ENCODE measurements at regions of chr1 and their contacts with region 1.

Region 1: GRCh38 chr1:86114236-86114635 is 42.3 kb downstream of the COL24A1 start:
- H3K4me3 ChIP-seq: no peak overlapping the region
- H3K27ac ChIP-seq: no peak overlapping the region
- H3K4me1 ChIP-seq: no peaks in the 10 kb centered on the region
- CTCF ChIP-seq: no peak

Region 2: GRCh38 chr1:86052948-86053698 is 61.1 kb before region 1 on chr1:
- CTCF ChIA-PET with region 1: no interaction called
- POLR2A ChIA-PET with region 1: interaction called, 17 read pairs
- H3K4me3 ChIP-seq: no peak overlapping the region
- H3K27ac ChIP-seq: no peak overlapping the region
- H3K4me1 ChIP-seq: no peaks in the 10 kb centered on the region
- CTCF ChIP-seq: no peak

Region 3: GRCh38 chr1:86137436-86137835 is 23.2 kb after region 1 on chr1:
- CTCF ChIA-PET with region 1: no interaction called
- POLR2A ChIA-PET with region 1: no interaction called
- H3K4me3 ChIP-seq: no peak overlapping the region
- H3K27ac ChIP-seq: no peak overlapping the region
- H3K4me1 ChIP-seq: no peaks in the 10 kb centered on the region
- CTCF ChIP-seq: no peak